Activated CD4-positive, alpha-beta memory T cell treated with anti-CD3 and anti-CD28 coated beads for 36 hours (primary cell): ENCODE measurements at regions of chr7 and their contacts with region 1.

Region 1: DNA sequence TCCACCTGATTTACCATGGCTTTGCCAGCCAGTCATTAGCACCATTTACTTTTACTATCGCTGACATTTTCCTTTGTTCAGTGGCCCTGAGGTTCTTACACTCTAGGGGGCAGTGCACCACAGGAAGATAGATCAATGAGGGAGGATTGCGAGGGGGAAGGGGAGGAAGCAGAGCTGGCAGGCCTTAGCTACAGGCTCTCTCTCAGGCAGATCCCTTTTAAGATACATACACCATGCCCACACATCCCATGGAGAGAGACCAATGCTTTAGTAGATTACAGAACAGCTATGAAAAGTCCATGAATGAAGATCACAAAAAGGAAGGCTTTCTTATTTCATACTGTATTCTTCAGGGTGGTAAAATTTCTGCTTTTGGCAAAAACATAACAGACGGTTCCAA is 47.4 kb downstream of the DENND11 start:
- DNase-seq: peak; percentile 73
- H3K4me3 Mint-ChIP-seq: no peak overlapping the region
- H3K27ac Mint-ChIP-seq: peak overlapping the region; percentile 52
- H3K4me1 Mint-ChIP-seq: peaks cover 4% of the 10 kb centered on the region
- H3K27me3 Mint-ChIP-seq: no peaks in the 10 kb centered on the region

Region 2: DNA sequence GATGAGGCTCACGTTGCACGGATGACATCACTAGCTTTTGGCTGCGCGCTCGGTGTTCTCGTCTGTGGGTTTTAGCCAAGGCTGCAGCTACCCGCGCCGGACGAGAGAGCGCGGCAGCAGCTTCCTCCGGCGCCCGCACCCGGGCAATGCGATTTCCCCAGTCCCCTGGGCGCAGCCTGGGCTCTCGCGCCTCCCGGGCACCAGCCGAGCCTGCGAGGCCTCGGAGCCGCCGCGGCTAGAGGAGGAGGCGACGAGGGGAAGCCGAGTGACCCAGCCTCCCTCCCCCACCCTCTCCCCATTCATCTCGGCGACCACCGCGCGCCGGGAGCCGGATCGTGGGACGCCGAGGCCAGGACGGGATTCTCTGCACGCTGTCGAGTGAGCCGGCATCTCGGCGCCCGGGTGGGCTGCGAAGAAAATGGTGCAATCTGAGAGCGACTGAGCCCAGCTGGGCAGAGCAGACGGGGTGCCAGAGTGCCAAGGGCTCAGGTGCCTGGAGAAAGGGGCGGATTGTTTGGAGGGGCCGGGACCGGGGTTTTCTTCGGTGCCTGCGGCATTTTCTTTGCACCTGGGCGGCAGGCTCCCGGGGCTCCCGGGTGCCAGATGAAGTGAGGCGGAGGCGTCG is 581.9 kb before region 1 on chr7:
- CTCF ChIA-PET with region 1: no interaction called
- POLR2A ChIA-PET with region 1: no interaction called
- intact Hi-C with region 1: loop called (anchors 5 kb)
- DNase-seq: peak; percentile 54
- H3K4me3 Mint-ChIP-seq: peak overlapping the region; percentile 68
- H3K27ac Mint-ChIP-seq: no peak overlapping the region
- H3K4me1 Mint-ChIP-seq: peaks cover 12% of the 10 kb centered on the region
- H3K27me3 Mint-ChIP-seq: peaks cover 44% of the 10 kb centered on the region

Region 3: GRCh38 chr7:141541375-141541774 is 113.2 kb before region 1 on chr7:
- CTCF ChIA-PET with region 1: no interaction called
- POLR2A ChIA-PET with region 1: no interaction called
- intact Hi-C with region 1: loop called (anchors 5 kb)
- DNase-seq: no peak
- H3K4me3 Mint-ChIP-seq: no peak overlapping the region
- H3K27ac Mint-ChIP-seq: no peak overlapping the region
- H3K4me1 Mint-ChIP-seq: no peaks in the 10 kb centered on the region
- H3K27me3 Mint-ChIP-seq: peaks cover 3% of the 10 kb centered on the region

Region 4: GRCh38 chr7:141679014-141679413 is 24.5 kb after region 1 on chr7:
- CTCF ChIA-PET with region 1: interaction called, 7 read pairs
- POLR2A ChIA-PET with region 1: no interaction called
- intact Hi-C with region 1: loop called (anchors 1 kb)
- DNase-seq: no peak
- H3K4me3 Mint-ChIP-seq: no peak overlapping the region
- H3K27ac Mint-ChIP-seq: no peak overlapping the region
- H3K4me1 Mint-ChIP-seq: peaks cover 20% of the 10 kb centered on the region
- H3K27me3 Mint-ChIP-seq: no peaks in the 10 kb centered on the region

Region 5: GRCh38 chr7:141701489-141702046 is 47.0 kb after region 1 on chr7:
- CTCF ChIA-PET with region 1: interaction called, 14 read pairs
- POLR2A ChIA-PET with region 1: no interaction called
- intact Hi-C with region 1: loop called (anchors 1 kb)
- DNase-seq: peak; percentile 79
- H3K4me3 Mint-ChIP-seq: peak overlapping the region; percentile 79
- H3K27ac Mint-ChIP-seq: no peak overlapping the region
- H3K4me1 Mint-ChIP-seq: peaks cover 47% of the 10 kb centered on the region
- H3K27me3 Mint-ChIP-seq: peaks cover 2% of the 10 kb centered on the region

Region 6: GRCh38 chr7:141785706-141786552 is 131.4 kb after region 1 on chr7:
- CTCF ChIA-PET with region 1: interaction called, 21 read pairs
- POLR2A ChIA-PET with region 1: no interaction called
- intact Hi-C with region 1: loop called (anchors 1 kb)
- DNase-seq: peak; percentile 27
- H3K4me3 Mint-ChIP-seq: no peak overlapping the region
- H3K27ac Mint-ChIP-seq: no peak overlapping the region
- H3K4me1 Mint-ChIP-seq: no peaks in the 10 kb centered on the region
- H3K27me3 Mint-ChIP-seq: no peaks in the 10 kb centered on the region

Region 7: DNA sequence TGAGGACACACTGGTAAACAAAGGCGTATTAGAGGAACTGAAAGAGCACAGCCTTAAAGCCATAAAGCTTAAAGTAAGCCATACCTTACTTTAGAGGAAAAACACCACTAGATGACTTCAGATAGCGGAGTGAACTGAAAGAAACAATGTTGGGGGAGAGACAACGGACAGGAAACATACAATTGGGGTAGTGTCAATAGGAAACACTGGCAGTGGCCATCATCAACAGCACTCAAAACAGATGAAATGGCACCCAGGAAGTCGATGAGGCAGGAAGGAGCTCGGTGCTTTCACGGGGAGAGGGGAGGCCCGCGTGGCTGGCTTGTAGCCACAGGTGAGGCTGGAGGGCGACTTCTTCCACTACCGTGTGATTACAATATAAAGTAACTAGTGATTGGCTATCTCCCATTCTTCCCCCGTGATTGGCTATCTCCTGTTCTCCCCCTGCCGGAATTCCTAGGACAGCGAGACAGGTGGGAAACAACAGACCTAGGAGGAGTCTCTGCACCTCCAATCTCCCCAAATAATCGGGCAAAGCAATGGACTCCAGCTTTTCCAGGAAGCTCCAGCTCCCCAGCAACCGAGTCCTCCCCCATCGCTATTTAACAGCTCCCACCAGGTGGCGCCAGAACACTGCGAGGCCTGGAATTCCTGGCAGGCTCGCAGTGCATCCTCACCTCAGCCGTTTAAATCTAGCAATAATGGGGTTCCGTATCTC is 321.4 kb after region 1 on chr7:
- CTCF ChIA-PET with region 1: no interaction called
- POLR2A ChIA-PET with region 1: no interaction called
- intact Hi-C with region 1: loop called (anchors 10 kb)
- DNase-seq: peak; percentile 80
- H3K4me3 Mint-ChIP-seq: peak overlapping the region; percentile 70
- H3K27ac Mint-ChIP-seq: no peak overlapping the region
- H3K4me1 Mint-ChIP-seq: peaks cover 5% of the 10 kb centered on the region
- H3K27me3 Mint-ChIP-seq: no peaks in the 10 kb centered on the region